A673 (cell line): ENCODE measurements at regions of chr4 and their contacts with region 1.

Region 1: DNA sequence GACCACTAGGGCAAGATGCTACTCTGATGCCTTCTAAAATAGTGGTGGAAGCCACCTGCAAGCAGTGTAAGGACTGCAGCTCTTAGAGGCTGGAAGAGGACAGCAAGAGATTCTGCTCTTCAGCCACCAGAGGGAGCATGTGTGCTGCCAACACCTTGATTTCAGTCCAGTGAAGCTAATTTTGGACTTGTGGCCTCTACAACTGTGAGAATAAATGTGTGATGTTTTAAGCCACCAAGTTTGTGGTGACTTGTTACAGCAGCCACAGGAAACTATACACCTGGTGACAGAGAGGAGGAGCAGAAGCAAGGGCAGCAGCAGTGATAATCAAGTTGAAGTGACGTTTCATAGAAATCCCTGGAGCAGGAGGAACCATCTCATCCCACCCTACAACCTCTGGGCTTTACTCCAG is 55.9 kb downstream of the FGFBP1 start:
- DNase-seq: peak; percentile 81
- H3K4me3 ChIP-seq: no peak overlapping the region
- H3K27ac ChIP-seq: no peak overlapping the region
- H3K4me1 ChIP-seq: peaks cover 20% of the 10 kb centered on the region
- H3K27me3 ChIP-seq: no peaks in the 10 kb centered on the region
- CTCF ChIP-seq: peak; percentile 93

Region 2: DNA sequence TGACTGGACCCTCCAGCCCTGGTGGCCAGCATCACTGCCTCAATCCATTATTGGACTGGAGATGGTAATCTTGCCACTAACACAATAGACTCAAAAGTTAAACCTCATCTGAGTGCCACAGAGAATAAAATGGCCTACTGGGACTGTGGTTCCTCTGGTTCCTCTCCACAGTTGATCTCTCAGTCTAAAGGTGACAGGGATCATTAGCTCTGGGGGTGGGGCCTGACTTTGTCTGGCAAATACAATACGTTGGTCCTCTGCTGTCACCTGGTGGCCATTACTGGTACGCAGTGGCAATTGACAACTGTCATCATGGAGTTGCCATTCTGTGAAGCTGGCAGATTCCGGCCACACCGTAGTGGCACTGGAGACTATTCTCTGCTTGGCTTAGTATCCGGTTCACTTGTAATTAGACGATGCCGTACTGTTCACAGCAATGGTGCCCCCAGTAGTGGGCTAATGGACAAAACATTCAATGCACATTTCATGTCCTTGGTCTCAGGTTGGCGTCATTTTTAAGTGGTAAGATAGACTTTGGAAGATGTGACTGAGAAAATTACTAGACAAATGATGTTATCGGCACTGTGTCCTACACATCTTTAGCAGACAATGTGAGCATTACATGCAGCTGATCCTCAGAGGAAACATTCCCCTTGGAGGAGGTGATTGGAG is 73.6 kb after region 1 on chr4:
- CTCF ChIA-PET with region 1: interaction called, 65 read pairs
- POLR2A ChIA-PET with region 1: no interaction called
- intact Hi-C with region 1: loop called (anchors 1 kb)
- DNase-seq: peak; percentile 78
- H3K4me3 ChIP-seq: no peak overlapping the region
- H3K27ac ChIP-seq: no peak overlapping the region
- H3K4me1 ChIP-seq: no peaks in the 10 kb centered on the region
- H3K27me3 ChIP-seq: no peaks in the 10 kb centered on the region
- CTCF ChIP-seq: peak; percentile 92

Region 3: DNA sequence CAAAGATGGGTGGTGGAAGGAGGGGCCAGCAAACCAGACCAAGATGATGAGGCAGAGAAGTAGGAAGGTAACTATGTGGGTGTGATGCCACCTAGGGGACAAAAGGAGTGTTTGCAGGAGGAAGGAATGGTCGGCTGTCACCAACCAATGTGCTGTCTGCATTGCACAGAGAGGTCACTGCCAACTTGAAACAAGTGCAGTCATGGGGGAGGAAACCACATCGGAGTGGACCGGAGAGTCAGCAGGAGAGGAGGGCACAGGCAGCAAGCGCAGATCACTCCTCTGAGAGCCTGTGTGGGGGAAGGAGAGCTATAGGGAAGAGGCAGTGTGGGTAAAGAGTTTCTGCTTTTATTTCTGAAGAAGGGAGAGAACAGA is 118.8 kb after region 1 on chr4:
- CTCF ChIA-PET with region 1: interaction called, 10 read pairs
- POLR2A ChIA-PET with region 1: no interaction called
- intact Hi-C with region 1: loop called (anchors 5 kb)
- DNase-seq: peak; percentile 82
- H3K4me3 ChIP-seq: no peak overlapping the region
- H3K27ac ChIP-seq: no peak overlapping the region
- H3K4me1 ChIP-seq: no peaks in the 10 kb centered on the region
- H3K27me3 ChIP-seq: no peaks in the 10 kb centered on the region
- CTCF ChIP-seq: peak; percentile 90